Mucosa of descending colon (tissue), 3 donors: ENCODE measurements at regions of chr16 and their contacts with region 1.

Region 1: DNA sequence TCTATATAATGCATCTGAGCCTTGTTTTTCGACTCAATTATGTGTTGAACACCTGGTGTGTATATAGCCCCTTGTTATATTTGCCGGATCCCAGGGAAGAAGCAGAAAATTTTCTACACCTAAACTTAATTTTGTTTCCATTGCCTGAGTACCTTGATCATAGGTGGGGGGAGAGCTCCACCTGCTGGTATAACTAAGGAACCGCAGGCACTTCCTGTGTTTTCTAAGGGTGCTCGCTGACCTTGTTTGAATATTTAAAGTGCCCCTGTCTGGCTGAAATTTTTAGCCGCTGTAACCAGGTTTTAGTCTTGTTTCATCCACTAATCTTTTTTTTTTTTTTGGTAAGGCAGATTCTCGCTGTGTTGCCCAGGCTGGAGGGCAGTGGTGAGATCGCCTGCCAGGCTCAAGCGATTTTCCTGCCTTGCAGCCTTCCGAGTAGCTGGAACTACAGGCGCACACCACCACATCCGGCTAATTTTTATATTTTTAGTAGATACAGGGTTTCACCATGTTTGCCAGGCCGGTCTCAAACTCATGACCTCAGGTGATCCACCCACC is 6.5 kb upstream of the NUBP1 start:
- DNase-seq: peak in 1 of 3 donors; percentile 73
- ATAC-seq: peak; percentile 94
- H3K4me3 ChIP-seq: no peak overlapping the region
- H3K4me1 ChIP-seq: no peaks in the 10 kb centered on the region
- CTCF ChIP-seq: peak; percentile 84

Region 2: GRCh38 chr16:10013364-10013763 is 723.8 kb before region 1 on chr16:
- intact Hi-C with region 1: no loop called
- DNase-seq: no peak
- ATAC-seq: no peak
- H3K4me3 ChIP-seq: no peak overlapping the region
- H3K4me1 ChIP-seq: no peaks in the 10 kb centered on the region
- CTCF ChIP-seq: no peak

Region 3: GRCh38 chr16:10256784-10257641 is 480.1 kb before region 1 on chr16:
- intact Hi-C with region 1: loop called (anchors 10 kb)
- DNase-seq: peak in 2 of 3 donors; percentile 13 to 37
- ATAC-seq: peak; percentile 81
- H3K4me3 ChIP-seq: no peak overlapping the region
- H3K4me1 ChIP-seq: no peaks in the 10 kb centered on the region
- CTCF ChIP-seq: peak; percentile 54

Region 4: GRCh38 chr16:10521681-10522274 is 215.4 kb before region 1 on chr16:
- intact Hi-C with region 1: loop called (anchors 2 to 5 kb)
- DNase-seq: peak in 2 of 3 donors; percentile 41 to 83
- ATAC-seq: peak; percentile 85
- H3K4me3 ChIP-seq: no peak overlapping the region
- H3K4me1 ChIP-seq: peaks cover 5% of the 10 kb centered on the region
- CTCF ChIP-seq: peak; percentile 73

Region 5: DNA sequence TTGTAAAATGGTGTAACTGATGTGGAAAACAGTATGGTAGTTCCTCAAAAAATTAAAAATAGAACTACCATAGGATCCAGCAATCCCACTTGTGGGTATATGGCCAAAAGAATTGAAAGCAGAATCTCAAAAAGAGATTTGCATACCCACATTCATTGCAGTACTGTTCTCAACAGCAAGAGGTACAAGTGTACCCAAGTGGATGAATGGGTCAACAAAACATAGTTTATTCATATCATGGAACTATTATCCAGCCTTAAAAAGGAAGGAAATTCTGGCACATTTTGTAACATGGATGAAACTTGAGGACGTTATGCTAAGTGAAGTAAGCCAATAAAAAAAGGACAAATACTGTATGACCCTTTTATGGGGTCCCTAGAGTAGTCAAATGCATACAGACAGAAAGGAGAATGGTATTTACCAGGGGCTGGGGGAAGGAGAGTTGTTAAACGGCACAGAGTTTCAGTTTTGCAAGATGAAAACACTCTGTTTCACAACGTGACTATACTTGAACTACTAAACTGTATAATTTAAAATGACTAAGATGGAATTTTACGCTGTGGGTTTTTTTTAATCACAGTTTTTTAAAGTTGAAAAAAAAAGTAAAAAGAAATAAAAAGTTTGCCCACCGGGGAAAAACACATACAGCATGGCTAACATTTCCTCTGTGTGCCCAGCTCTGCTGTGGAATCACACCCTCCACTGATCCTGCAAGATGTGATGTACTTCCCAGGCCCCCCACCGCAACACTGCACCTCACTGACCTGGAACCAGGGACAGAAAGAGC is 75.4 kb after region 1 on chr16:
- intact Hi-C with region 1: no loop called
- DNase-seq: no peak
- ATAC-seq: no peak
- H3K4me3 ChIP-seq: no peak overlapping the region
- H3K4me1 ChIP-seq: no peaks in the 10 kb centered on the region
- CTCF ChIP-seq: no peak

Region 6: GRCh38 chr16:11076259-11077018 is 339.3 kb after region 1 on chr16:
- intact Hi-C with region 1: no loop called
- DNase-seq: no peak
- ATAC-seq: peak; percentile 16
- H3K4me3 ChIP-seq: no peak overlapping the region
- H3K4me1 ChIP-seq: peaks cover 25% of the 10 kb centered on the region
- CTCF ChIP-seq: no peak